Activated CD8-positive, alpha-beta T cell treated with anti-CD3 and anti-CD28 coated beads for 36 hours (primary cell): ENCODE measurements at regions of chr15 and their contacts with region 1.

Region 1: GRCh38 chr15:81400640-81401236 is 26.7 kb upstream of the TMC3 start:
- DNase-seq: no peak
- ATAC-seq: no peak
- H3K4me3 Mint-ChIP-seq: no peak overlapping the region
- H3K27ac Mint-ChIP-seq: no peak overlapping the region
- H3K4me1 Mint-ChIP-seq: peaks cover 3% of the 10 kb centered on the region
- H3K27me3 Mint-ChIP-seq: no peaks in the 10 kb centered on the region
- CTCF ChIP-seq: peak; percentile 82

Region 2: GRCh38 chr15:81388436-81388770 is 12.3 kb before region 1 on chr15:
- CTCF ChIA-PET with region 1: interaction called, 15 read pairs
- POLR2A ChIA-PET with region 1: no interaction called
- intact Hi-C with region 1: no loop called
- DNase-seq: no peak
- ATAC-seq: no peak
- H3K4me3 Mint-ChIP-seq: no peak overlapping the region
- H3K27ac Mint-ChIP-seq: no peak overlapping the region
- H3K4me1 Mint-ChIP-seq: no peaks in the 10 kb centered on the region
- H3K27me3 Mint-ChIP-seq: no peaks in the 10 kb centered on the region
- CTCF ChIP-seq: no peak

Region 3: GRCh38 chr15:81442454-81442853 is 41.7 kb after region 1 on chr15:
- CTCF ChIA-PET with region 1: no interaction called
- POLR2A ChIA-PET with region 1: no interaction called
- intact Hi-C with region 1: no loop called
- DNase-seq: no peak
- ATAC-seq: no peak
- H3K4me3 Mint-ChIP-seq: no peak overlapping the region
- H3K27ac Mint-ChIP-seq: no peak overlapping the region
- H3K4me1 Mint-ChIP-seq: no peaks in the 10 kb centered on the region
- H3K27me3 Mint-ChIP-seq: peaks cover 8% of the 10 kb centered on the region
- CTCF ChIP-seq: no peak

Region 4: GRCh38 chr15:81516461-81516860 is 115.7 kb after region 1 on chr15:
- CTCF ChIA-PET with region 1: no interaction called
- POLR2A ChIA-PET with region 1: no interaction called
- intact Hi-C with region 1: no loop called
- DNase-seq: no peak
- ATAC-seq: no peak
- H3K4me3 Mint-ChIP-seq: no peak overlapping the region
- H3K27ac Mint-ChIP-seq: no peak overlapping the region
- H3K4me1 Mint-ChIP-seq: no peaks in the 10 kb centered on the region
- H3K27me3 Mint-ChIP-seq: peaks cover 3% of the 10 kb centered on the region
- CTCF ChIP-seq: no peak

Region 5: GRCh38 chr15:81596159-81596865 is 195.6 kb after region 1 on chr15:
- CTCF ChIA-PET with region 1: no interaction called
- POLR2A ChIA-PET with region 1: no interaction called
- intact Hi-C with region 1: no loop called
- DNase-seq: no peak
- ATAC-seq: no peak
- H3K4me3 Mint-ChIP-seq: no peak overlapping the region
- H3K27ac Mint-ChIP-seq: no peak overlapping the region
- H3K4me1 Mint-ChIP-seq: no peaks in the 10 kb centered on the region
- H3K27me3 Mint-ChIP-seq: peaks cover 3% of the 10 kb centered on the region
- CTCF ChIP-seq: no peak